Sciatic nerve (tissue), 2 donors: ENCODE measurements at regions of chr3 and their contacts with region 1.

Region 1: DNA sequence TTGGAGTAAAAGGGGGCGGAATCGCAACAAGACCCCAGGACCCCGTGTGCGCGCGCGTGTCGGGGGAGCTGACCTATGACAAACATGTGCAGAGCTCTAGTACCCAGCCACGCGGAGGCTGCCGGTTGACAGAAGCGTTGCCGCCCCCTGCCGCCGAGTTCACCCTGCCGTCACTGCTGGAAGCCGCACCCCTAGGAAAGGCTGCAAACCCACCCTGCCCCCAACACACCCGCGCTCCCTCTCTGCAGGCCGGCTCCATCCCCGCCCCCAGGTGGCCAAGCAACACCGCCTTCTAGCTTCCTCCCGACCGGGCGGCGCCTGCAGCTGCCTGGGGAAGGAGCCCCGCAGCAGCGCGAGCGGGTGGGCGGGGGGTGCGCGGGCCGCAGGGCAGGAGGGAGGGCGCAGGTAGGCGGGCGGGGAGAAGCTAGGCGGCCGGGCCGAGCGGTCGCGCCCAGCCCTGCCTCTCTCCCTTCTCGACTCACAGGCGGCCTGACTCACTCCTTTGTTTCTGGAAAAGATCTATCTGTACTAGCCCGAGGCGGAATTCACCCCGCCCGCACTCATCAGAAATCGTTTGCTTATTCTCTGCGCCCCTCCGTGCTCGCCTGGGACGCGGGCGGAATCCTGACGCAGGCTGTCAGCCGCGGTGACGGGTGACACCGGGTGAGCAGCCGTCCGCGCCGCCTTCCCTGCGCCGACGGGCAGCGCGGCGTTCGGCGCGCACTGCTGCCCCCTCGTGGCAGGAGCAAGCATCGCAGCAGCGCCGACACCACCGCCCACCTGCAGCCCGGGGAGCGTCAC is 160.8 kb downstream of the GAP43 start:
- DNase-seq: peak; percentile 94
- ATAC-seq: peak; percentile 95

Region 2: DNA sequence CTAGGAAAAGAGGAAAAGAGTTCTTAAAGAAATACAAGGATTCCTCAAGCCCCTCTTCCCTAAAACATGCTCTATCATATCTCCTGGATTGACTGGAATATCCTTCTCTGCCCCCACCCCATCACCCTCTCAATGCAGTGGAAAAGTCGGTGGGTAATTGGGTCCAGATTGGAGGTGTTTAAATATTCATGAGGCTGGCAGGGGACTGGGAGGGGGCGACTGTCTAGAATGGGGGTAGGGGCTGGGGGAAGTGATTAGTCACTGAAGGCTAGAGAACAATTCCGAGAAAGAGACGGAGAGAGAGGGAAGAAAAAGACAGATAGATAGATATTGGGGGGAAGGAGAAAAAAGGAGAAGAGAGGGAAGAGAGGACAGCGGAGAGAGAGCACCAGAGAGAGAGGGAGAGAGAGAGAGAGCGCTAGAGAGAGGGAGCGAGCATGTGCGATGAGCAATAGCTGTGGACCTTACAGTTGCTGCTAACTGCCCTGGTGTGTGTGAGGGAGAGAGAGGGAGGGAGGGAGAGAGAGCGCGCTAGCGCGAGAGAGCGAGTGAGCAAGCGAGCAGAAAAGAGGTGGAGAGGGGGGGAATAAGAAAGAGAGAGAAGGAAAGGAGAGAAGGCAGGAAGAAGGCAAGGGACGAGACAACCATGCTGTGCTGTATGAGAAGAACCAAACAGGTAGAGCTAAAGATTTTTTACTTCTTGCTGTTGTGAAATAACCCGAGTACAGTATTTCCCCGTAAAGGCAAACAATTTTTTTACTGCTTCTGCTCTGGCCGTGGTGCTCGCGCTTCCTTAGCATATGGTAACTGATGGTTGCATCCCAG is 160.9 kb before region 1 on chr3 and contains the start of gene GAP43:
- intact Hi-C with region 1: no loop called
- DNase-seq: peak; percentile 61
- ATAC-seq: peak; percentile 90
- total RNA-seq, gene GAP43: 6.0 TPM

Region 3: DNA sequence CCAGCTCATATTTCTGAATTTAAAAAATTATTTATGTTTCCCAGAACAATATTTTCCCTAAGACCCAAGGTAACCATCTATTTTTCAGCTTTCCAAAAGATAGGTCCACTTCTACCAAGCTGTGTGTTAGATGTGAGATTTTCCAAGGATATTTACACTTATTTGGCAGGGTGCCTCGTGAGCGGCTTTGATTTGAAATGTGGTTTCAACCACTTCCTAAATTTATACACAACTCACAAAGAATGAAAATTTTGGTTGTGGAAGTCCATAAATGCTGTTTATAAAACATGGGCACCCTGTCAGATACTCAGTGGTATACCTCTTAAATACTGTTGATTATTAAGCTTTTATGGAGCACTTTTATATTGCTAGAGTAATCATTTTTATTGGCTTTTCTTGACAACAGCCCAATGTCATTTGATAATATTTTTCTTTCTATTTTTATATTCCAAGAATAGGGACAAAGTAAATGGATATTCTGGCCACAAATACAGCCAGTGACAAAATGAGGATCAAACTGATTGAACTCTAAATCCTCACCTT is 103.3 kb before region 1 on chr3:
- intact Hi-C with region 1: no loop called
- DNase-seq: no peak
- ATAC-seq: no peak

Region 4: GRCh38 chr3:115692887-115693524 is 91.1 kb before region 1 on chr3:
- intact Hi-C with region 1: loop called (anchors 10 kb)
- DNase-seq: peak; percentile 83
- ATAC-seq: peak; percentile 94